ENCODE measurements at regions of chr19 and their contacts with region 1.

Region 1: DNA sequence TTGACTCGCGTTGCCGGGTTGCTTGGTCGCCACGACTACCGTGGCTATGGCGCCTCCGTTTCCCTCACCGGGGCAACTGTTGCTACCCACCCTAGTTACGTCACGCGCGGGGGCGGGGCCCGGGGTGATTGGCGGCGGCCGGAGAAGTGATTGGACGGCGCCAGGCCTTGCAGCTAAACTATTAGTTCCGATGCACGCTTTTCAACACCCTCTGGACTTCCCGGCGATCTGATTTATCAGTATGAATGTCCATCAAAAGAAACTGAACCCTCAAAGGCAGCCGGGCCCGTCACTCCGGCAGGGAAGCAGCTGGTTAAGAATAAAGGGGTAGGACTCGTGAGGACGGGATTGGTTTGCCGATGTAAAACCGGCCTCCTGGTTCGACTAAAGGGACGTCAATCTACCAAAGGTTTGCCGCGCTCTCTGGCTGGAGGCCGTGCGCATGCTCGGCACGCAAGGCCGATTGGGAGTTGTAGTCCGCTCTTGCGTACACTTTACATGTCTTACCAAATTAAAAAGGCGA is at the start of gene RFX1:
- DNase-seq: peak; percentile 100
- H3K4me3 ChIP-seq: peak within 1 kb of the TSS; percentile 63 to 73 (median 69)
- H3K27ac ChIP-seq: peak within 1 kb of the TSS; percentile 91
- H3K4me1 ChIP-seq: peaks cover 20% of the 10 kb centered on the region
- H3K27me3 ChIP-seq: no peaks in the 10 kb centered on the region
- CTCF ChIP-seq: no peak
- POLR2A ChIP-seq: no peak
- total RNA-seq, gene RFX1: 14.4 and 14.7 TPM in 2 replicates

Region 2: DNA sequence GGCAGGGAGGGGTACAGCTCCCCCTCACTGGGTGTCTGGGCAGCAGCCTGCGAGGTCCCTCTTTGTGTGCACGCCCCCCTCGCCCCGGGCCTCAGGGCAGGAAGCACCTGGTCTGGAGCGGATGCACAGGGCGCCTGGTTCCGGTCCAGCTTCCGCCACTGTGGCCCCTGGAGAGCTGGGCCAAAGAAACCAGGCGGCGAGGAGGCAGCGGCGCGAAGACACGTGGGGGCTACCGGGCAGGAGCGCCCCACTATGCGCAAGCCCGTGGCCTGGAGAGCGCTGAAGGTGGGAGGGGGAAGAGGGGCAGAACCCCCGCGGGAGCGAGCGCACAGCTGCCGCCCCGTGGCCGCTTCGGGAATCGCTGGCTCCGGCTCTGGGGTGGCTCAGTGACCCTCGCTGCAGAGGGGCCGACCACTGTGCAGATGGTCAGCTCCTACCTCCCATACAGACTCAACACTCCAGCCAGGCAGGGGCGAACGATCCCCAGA is 901.9 kb before region 1 on chr19:
- CTCF ChIA-PET with region 1: no interaction called
- POLR2A ChIA-PET with region 1: no interaction called
- dilution Hi-C with region 1: no loop called
- intact Hi-C with region 1: loop called (anchors 5 kb)
- DNase-seq: peak; percentile 94
- H3K4me3 ChIP-seq: no peak overlapping the region
- H3K27ac ChIP-seq: peak overlapping the region; percentile 60
- H3K4me1 ChIP-seq: peaks cover 41% of the 10 kb centered on the region
- H3K27me3 ChIP-seq: no peaks in the 10 kb centered on the region
- CTCF ChIP-seq: peak; percentile 85 to 95
- POLR2A ChIP-seq: peak; percentile 80

Region 3: GRCh38 chr19:13952154-13953035 is 53.9 kb before region 1 on chr19 and contains the start of gene DCAF15:
- CTCF ChIA-PET with region 1: interaction called, 7 read pairs
- POLR2A ChIA-PET with region 1: interaction called, 5 read pairs
- dilution Hi-C with region 1: no loop called
- intact Hi-C with region 1: loop called (anchors 1 kb)
- DNase-seq: peak; percentile 100
- H3K4me3 ChIP-seq: peak within 1 kb of the TSS; percentile 76 to 87 (median 83)
- H3K27ac ChIP-seq: peak within 1 kb of the TSS; percentile 63
- H3K4me1 ChIP-seq: peaks cover 10% of the 10 kb centered on the region
- H3K27me3 ChIP-seq: no peaks in the 10 kb centered on the region
- CTCF ChIP-seq: no peak
- POLR2A ChIP-seq: peak; percentile 66
- total RNA-seq, gene DCAF15: 42.4 and 47.9 TPM in 2 replicates

Region 4: DNA sequence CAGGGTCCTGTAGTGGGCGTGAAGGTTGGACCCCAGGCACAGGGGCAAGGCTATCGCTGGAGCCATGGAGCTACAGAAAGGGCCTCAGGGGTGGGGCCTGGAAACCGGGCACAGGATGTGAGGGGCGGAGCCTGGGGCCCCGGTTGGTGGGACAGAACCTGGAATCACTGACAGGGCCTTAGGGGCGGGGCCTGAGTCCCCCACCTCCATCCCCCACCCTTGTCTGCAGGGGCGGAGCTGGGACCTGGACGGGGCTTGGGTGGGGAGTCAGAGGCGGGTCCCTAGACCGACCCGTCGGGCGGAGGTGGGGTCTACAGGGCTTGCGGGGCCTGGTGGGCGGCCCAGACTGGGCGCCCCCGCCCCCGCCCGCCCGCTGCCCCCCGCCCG is 28.0 kb before region 1 on chr19:
- CTCF ChIA-PET with region 1: interaction called, 11 read pairs
- POLR2A ChIA-PET with region 1: no interaction called
- dilution Hi-C with region 1: no loop called
- intact Hi-C with region 1: loop called (anchors 1 kb)
- DNase-seq: peak; percentile 59
- H3K4me3 ChIP-seq: peak overlapping the region in 1 of 3 experiments; percentile 42
- H3K27ac ChIP-seq: no peak overlapping the region
- H3K4me1 ChIP-seq: peaks cover 9% of the 10 kb centered on the region
- H3K27me3 ChIP-seq: no peaks in the 10 kb centered on the region
- CTCF ChIP-seq: no peak
- POLR2A ChIP-seq: no peak

Region 5: GRCh38 chr19:14048443-14049153 is 42.3 kb after region 1 on chr19:
- CTCF ChIA-PET with region 1: interaction called, 4 read pairs
- POLR2A ChIA-PET with region 1: no interaction called
- dilution Hi-C with region 1: no loop called
- intact Hi-C with region 1: loop called (anchors 2 kb)
- DNase-seq: peak; percentile 35
- H3K4me3 ChIP-seq: no peak overlapping the region
- H3K27ac ChIP-seq: no peak overlapping the region
- H3K4me1 ChIP-seq: no peaks in the 10 kb centered on the region
- H3K27me3 ChIP-seq: no peaks in the 10 kb centered on the region
- CTCF ChIP-seq: peak; percentile 83 to 91
- POLR2A ChIP-seq: no peak

Region 6: GRCh38 chr19:14081325-14082093 is 75.2 kb after region 1 on chr19:
- CTCF ChIA-PET with region 1: interaction called, 4 read pairs
- POLR2A ChIA-PET with region 1: no interaction called
- dilution Hi-C with region 1: no loop called
- intact Hi-C with region 1: loop called (anchors 2 kb)
- DNase-seq: peak; percentile 100
- H3K4me3 ChIP-seq: peak overlapping the region; percentile 59 to 77 (median 69)
- H3K27ac ChIP-seq: peak overlapping the region; percentile 66
- H3K4me1 ChIP-seq: peaks cover 12% of the 10 kb centered on the region
- H3K27me3 ChIP-seq: no peaks in the 10 kb centered on the region
- CTCF ChIP-seq: no peak
- POLR2A ChIP-seq: peak; percentile 97

Measured in endothelial cell of umbilical vein (primary cell).